ENCODE measurements at regions of chr11 and their contacts with region 1.

Region 1: GRCh38 chr11:65558002-65558931 is at the start of gene LTBP3:
- DNase-seq: peak in 4 of 5 donors; percentile 32 to 63 (median 40)
- H3K4me3 ChIP-seq: peak within 1 kb of the TSS; percentile 53
- H3K4me3 Mint-ChIP-seq: peak within 1 kb of the TSS; percentile 80 to 94 (median 91)
- H3K27ac ChIP-seq: peak within 1 kb of the TSS; percentile 54
- H3K27ac Mint-ChIP-seq: peak within 1 kb of the TSS; percentile 84 to 97 (median 94)
- H3K4me1 ChIP-seq: peaks cover 59% of the 10 kb centered on the region
- H3K4me1 Mint-ChIP-seq: peaks cover 37 to 62% (median 44%) of the 10 kb centered on the region in 3 donors
- H3K27me3 ChIP-seq: no peaks in the 10 kb centered on the region
- H3K27me3 Mint-ChIP-seq: peaks cover 0 to 3% of the 10 kb centered on the region in 2 donors
- total RNA-seq, gene LTBP3: 33.2 to 35.4 TPM

Region 2: DNA sequence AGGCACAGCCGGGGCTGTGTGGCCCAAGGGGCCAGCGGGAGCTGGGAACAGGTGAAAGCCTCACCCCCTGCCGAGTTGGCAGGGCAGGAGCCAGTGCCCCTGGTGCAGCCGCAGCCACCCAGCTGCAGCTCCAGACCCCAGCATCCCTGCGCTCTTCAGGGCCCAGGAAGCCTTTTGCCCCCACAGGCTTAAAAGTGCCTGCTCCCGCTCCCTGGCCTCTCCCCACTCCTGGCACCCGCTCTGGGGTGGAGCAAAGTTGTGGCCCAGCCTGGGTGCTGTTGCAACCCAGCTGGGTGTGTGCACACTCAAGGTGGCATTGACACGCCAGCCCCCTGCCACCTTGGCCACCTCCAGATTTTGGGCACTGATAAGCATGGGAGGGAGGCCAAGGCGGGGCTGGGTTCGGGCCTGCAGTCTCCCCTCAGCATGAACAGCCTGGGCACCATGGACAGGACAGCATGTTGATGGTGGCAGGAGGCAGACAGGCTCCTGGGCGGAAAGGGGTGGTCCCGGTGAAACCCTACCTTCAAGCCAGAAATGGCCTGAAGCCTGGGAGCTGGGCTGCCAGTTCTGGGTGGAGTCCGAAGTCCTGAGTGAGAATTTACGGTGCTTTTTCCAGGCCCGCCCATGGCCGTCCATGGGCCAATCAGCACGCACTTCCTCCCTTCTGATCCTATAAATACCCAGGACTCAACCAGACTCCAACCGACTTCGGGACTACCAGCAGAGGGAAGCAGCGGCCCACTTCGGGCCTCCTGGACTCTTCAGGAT is 185.8 kb after region 1 on chr11:
- CTCF ChIA-PET with region 1: no interaction called
- POLR2A ChIA-PET with region 1: interaction called, 11 read pairs
- DNase-seq: no peak
- H3K4me3 ChIP-seq: no peak overlapping the region
- H3K4me3 Mint-ChIP-seq: no peak overlapping the region
- H3K27ac ChIP-seq: no peak overlapping the region
- H3K27ac Mint-ChIP-seq: no peak overlapping the region
- H3K4me1 ChIP-seq: no peaks in the 10 kb centered on the region
- H3K4me1 Mint-ChIP-seq: no peaks in the 10 kb centered on the region
- H3K27me3 ChIP-seq: no peaks in the 10 kb centered on the region
- H3K27me3 Mint-ChIP-seq: peaks cover 18 to 32% of the 10 kb centered on the region in 2 donors

Measured in CD8-positive, alpha-beta memory T cell (primary cell).